CD4-positive, alpha-beta memory T cell (primary cell): ENCODE measurements at regions of chr11 and their contacts with region 1.

Region 1: GRCh38 chr11:36492724-36493304 is 17.3 kb downstream of the TRAF6 start:
- DNase-seq: peak in 4 of 5 donors; percentile 42 to 54 (median 46)
- H3K4me3 ChIP-seq: no peak overlapping the region
- H3K4me3 Mint-ChIP-seq: no peak overlapping the region
- H3K27ac ChIP-seq: no peak overlapping the region
- H3K27ac Mint-ChIP-seq: peak overlapping the region in 5 of 7 donors; percentile 18 to 76 (median 26)
- H3K4me1 ChIP-seq: peaks cover 13% of the 10 kb centered on the region
- H3K4me1 Mint-ChIP-seq: peaks cover 13 to 31% (median 17%) of the 10 kb centered on the region in 4 donors
- H3K27me3 ChIP-seq: no peaks in the 10 kb centered on the region
- H3K27me3 Mint-ChIP-seq: no peaks in the 10 kb centered on the region

Region 2: GRCh38 chr11:36300651-36301050 is 192.2 kb before region 1 on chr11:
- CTCF ChIA-PET with region 1: interaction called, 131 read pairs
- POLR2A ChIA-PET with region 1: no interaction called
- intact Hi-C with region 1: no loop called
- DNase-seq: no peak
- H3K4me3 ChIP-seq: no peak overlapping the region
- H3K4me3 Mint-ChIP-seq: no peak overlapping the region
- H3K27ac ChIP-seq: no peak overlapping the region
- H3K27ac Mint-ChIP-seq: no peak overlapping the region
- H3K4me1 ChIP-seq: no peaks in the 10 kb centered on the region
- H3K4me1 Mint-ChIP-seq: no peaks in the 10 kb centered on the region
- H3K27me3 ChIP-seq: no peaks in the 10 kb centered on the region
- H3K27me3 Mint-ChIP-seq: peaks cover 0 to 12% of the 10 kb centered on the region in 2 donors

Region 3: GRCh38 chr11:36306888-36307287 is 185.9 kb before region 1 on chr11:
- CTCF ChIA-PET with region 1: interaction called, 19 read pairs
- POLR2A ChIA-PET with region 1: no interaction called
- intact Hi-C with region 1: loop called (anchors 1 kb)
- DNase-seq: peak in 2 of 5 donors; percentile 15 to 21
- H3K4me3 ChIP-seq: no peak overlapping the region
- H3K4me3 Mint-ChIP-seq: peak overlapping the region in 1 of 8 donors; percentile 49
- H3K27ac ChIP-seq: no peak overlapping the region
- H3K27ac Mint-ChIP-seq: peak overlapping the region in 1 of 7 donors; percentile 38
- H3K4me1 ChIP-seq: no peaks in the 10 kb centered on the region
- H3K4me1 Mint-ChIP-seq: peaks cover 0 to 10% (median 4%) of the 10 kb centered on the region in 4 donors
- H3K27me3 ChIP-seq: no peaks in the 10 kb centered on the region
- H3K27me3 Mint-ChIP-seq: peaks cover 3 to 12% of the 10 kb centered on the region in 2 donors

Region 4: DNA sequence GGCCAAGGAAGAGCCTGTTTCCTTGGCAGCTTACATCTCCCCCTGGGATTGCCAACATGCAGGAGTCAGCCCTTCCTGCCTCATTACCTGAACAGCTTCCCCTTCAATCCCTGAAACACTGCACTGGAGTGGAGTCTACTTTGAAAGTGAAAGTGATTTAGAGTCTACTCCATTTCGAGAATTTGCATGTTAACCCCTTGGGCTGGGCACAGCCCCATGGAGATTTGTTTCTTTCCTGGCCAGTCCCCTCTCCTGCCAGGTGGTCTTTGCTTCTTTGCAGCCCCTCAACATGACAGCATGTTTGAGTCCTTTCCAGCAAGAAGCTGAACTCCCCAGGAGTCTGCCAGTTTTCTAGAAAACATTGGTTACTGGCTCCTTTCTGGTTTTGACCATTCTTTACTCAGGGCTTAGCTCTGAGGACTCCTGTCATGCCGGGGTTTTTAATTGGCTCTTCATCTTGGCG is 42.7 kb before region 1 on chr11:
- CTCF ChIA-PET with region 1: interaction called, 13 read pairs
- POLR2A ChIA-PET with region 1: interaction called, 3 read pairs
- intact Hi-C with region 1: no loop called
- DNase-seq: peak in 1 of 5 donors; percentile 10
- H3K4me3 ChIP-seq: no peak overlapping the region
- H3K4me3 Mint-ChIP-seq: peak overlapping the region; percentile 24 to 83 (median 65)
- H3K27ac ChIP-seq: no peak overlapping the region
- H3K27ac Mint-ChIP-seq: peak overlapping the region; percentile 28 to 89 (median 76)
- H3K4me1 ChIP-seq: peaks cover 54% of the 10 kb centered on the region
- H3K4me1 Mint-ChIP-seq: peaks cover 45 to 68% (median 56%) of the 10 kb centered on the region in 4 donors
- H3K27me3 ChIP-seq: no peaks in the 10 kb centered on the region
- H3K27me3 Mint-ChIP-seq: no peaks in the 10 kb centered on the region

Region 5: DNA sequence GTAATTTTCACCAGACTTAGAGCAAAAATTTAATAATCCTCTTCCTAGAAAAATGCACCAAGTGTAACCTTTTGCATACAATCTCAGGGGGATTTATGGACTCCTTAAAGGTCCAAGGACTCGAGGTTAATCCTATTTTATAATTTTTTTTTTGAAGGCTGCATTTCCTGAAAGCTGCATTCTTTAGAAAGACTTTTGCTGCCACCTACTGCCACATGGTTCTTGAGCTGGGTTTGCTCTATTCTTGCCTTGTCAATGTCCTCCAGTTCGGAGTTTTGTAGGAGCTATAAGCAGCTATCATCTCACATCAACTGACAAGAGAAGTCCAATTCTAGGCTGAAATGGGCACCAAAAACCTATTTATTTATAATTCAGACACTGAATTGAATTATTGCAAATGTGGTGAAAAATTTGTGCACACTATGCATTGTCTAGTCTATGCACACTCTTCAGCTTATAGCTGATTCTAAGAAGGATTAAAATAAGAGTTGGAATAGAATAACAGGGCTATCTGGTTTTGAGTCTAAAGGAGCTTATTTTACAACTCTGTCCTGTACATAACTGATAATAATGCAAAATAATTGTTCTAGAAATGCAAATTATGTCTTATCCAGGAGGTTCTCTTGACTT is 14.0 kb before region 1 on chr11:
- CTCF ChIA-PET with region 1: interaction called, 61 read pairs
- POLR2A ChIA-PET with region 1: no interaction called
- intact Hi-C with region 1: no loop called
- DNase-seq: peak in 4 of 5 donors; percentile 34 to 43 (median 40)
- H3K4me3 ChIP-seq: no peak overlapping the region
- H3K4me3 Mint-ChIP-seq: no peak overlapping the region
- H3K27ac ChIP-seq: no peak overlapping the region
- H3K27ac Mint-ChIP-seq: peak overlapping the region in 1 of 7 donors; percentile 10
- H3K4me1 ChIP-seq: no peaks in the 10 kb centered on the region
- H3K4me1 Mint-ChIP-seq: peaks cover 3 to 8% (median 6%) of the 10 kb centered on the region in 4 donors
- H3K27me3 ChIP-seq: no peaks in the 10 kb centered on the region
- H3K27me3 Mint-ChIP-seq: no peaks in the 10 kb centered on the region

Region 6: GRCh38 chr11:36509694-36510566 is 17.1 kb after region 1 on chr11 and contains the start of gene TRAF6:
- CTCF ChIA-PET with region 1: interaction called, 82 read pairs
- POLR2A ChIA-PET with region 1: interaction called, 3 read pairs
- intact Hi-C with region 1: loop called (anchors 2 kb)
- DNase-seq: peak; percentile 82 to 88 (median 86)
- H3K4me3 ChIP-seq: peak within 1 kb of the TSS; percentile 63 to 96
- H3K4me3 Mint-ChIP-seq: peak within 1 kb of the TSS; percentile 94 to 99 (median 98)
- H3K27ac ChIP-seq: peak within 1 kb of the TSS; percentile 78
- H3K27ac Mint-ChIP-seq: peak within 1 kb of the TSS; percentile 93 to 98 (median 96)
- H3K4me1 ChIP-seq: peaks cover 35% of the 10 kb centered on the region
- H3K4me1 Mint-ChIP-seq: peaks cover 27 to 44% (median 31%) of the 10 kb centered on the region in 4 donors
- H3K27me3 ChIP-seq: peaks cover 4% of the 10 kb centered on the region
- H3K27me3 Mint-ChIP-seq: peaks cover 0 to 4% of the 10 kb centered on the region in 2 donors
- total RNA-seq, gene TRAF6: 22.0 to 23.7 TPM